Right ventricle myocardium inferior (tissue), 1 donor: ENCODE measurements at regions of chr14 and their contacts with region 1.

Region 1: GRCh38 chr14:89600950-89601826 is 184.2 kb upstream of the FOXN3 start:
- DNase-seq: no peak
- ATAC-seq: no peak

Region 2: DNA sequence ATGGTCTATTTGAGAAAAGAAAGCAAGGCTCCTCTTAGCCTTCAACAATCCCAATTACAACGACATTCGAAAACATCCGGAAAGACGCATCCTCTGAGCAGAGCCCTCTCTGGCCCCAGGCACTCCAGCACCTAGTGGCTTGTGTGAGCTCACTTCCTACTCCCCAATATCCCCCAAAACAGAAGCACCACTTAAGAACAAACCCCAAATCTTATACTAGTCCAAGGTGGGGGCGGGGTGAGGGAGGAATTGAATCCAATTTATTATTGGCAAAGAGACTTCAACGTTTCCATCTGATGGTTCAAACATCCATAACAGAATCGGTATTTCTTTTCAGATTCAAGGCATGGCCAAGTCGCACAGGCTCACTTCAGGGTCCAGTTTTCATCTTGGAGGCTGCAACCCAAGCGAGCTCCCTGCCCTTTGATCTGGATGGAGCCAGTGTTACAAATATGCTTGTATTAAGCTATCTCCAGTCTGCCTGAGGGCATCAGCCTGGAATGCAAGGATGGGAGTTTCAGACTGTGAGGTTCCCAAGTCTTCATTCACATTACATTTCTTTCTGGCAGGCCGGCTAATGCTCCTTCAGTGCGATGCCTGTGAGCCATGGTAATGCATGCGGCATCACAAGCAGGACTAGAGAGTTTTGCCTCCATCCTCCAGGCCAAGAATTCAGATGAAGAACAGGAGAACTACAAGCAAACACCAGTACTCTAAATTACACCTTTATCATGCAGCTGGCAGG is 51.6 kb before region 1 on chr14:
- intact Hi-C with region 1: loop called (anchors 5 kb)
- DNase-seq: no peak
- ATAC-seq: no peak

Region 3: DNA sequence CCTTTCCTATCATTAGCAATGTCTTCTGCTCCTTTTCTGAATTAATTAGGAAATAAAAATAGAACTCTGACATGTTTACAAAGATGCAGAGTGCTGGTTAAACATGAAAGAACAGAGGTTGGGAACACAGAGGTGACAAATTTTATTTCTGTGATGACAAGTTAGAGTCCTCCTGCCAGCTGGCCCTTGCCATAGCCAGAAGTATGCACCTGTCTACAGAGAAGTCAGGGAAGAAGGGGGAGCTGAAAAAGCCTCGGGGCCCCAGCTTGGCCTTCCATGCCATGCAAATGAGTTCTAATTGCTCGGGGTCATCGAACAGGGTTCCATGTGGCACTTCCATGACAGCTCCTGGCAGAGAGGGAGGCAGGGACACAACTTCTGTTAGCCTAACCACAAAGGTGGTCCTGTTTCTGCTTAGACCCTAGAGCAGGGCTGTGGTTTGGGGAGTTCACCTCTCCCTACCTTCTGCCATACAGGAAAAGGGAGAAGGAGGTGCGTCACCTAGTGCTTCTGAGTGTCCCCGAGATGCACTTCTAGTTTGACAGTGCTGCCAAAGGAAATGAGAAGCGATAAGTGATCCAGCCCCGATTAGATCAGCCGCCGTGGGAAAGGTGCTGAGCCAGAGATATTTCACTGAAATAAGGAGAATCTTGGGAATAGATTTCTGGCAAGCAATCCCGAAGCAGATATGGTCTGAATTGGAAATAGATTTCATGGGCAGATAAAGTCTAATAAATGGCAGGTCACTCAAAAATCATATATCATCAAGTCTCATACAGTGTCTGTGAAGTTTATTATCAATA is 28.4 kb before region 1 on chr14:
- intact Hi-C with region 1: loop called (anchors 2 kb)
- DNase-seq: no peak
- ATAC-seq: peak; percentile 47